Sciatic nerve (tissue), 2 donors: ENCODE measurements at regions of chr15 and their contacts with region 1.

Region 1: DNA sequence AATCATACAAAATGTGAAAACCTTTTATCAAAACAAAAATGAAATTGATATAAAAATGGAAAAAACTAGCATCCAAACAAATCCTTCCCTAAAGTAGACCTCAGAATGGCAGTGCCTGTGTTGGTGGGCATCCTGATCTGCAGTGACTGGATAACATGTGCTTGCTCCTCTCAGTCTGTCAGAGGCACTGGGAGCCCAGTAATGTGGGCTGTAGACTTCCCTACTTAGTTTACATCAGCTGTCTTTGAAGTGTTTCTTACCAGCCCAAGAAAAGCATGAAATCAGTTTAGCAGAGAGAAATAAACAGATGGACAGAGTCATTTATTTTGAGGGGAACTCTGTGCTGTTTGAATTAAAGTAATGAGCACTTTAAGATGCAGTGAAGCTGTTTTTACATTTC is 37.8 kb upstream of the RORA start:
- DNase-seq: no peak
- ATAC-seq: no peak

Region 2: GRCh38 chr15:61828012-61828411 is 561.1 kb after region 1 on chr15:
- intact Hi-C with region 1: loop called (anchors 5 kb)
- DNase-seq: no peak
- ATAC-seq: no peak

Region 3: GRCh38 chr15:62150445-62150844 is 883.5 kb after region 1 on chr15:
- intact Hi-C with region 1: no loop called
- DNase-seq: no peak
- ATAC-seq: no peak